Activated CD4-positive, alpha-beta T cell treated with anti-CD3 and anti-CD28 coated beads, Interleukin-2, amount 10 ng/mL, durations not matched to agents 24 days and 14 days (primary cell): ENCODE measurements at regions of chr9 and their contacts with region 1.

Region 1: GRCh38 chr9:89602978-89603766 is 1.6 kb upstream of the GADD45G start:
- DNase-seq: peak; percentile 97
- H3K4me3 Mint-ChIP-seq: peak overlapping the region; percentile 92
- H3K27ac Mint-ChIP-seq: peak overlapping the region; percentile 89
- H3K4me1 Mint-ChIP-seq: peaks cover 32% of the 10 kb centered on the region
- H3K27me3 Mint-ChIP-seq: peaks cover 17% of the 10 kb centered on the region

Region 2: DNA sequence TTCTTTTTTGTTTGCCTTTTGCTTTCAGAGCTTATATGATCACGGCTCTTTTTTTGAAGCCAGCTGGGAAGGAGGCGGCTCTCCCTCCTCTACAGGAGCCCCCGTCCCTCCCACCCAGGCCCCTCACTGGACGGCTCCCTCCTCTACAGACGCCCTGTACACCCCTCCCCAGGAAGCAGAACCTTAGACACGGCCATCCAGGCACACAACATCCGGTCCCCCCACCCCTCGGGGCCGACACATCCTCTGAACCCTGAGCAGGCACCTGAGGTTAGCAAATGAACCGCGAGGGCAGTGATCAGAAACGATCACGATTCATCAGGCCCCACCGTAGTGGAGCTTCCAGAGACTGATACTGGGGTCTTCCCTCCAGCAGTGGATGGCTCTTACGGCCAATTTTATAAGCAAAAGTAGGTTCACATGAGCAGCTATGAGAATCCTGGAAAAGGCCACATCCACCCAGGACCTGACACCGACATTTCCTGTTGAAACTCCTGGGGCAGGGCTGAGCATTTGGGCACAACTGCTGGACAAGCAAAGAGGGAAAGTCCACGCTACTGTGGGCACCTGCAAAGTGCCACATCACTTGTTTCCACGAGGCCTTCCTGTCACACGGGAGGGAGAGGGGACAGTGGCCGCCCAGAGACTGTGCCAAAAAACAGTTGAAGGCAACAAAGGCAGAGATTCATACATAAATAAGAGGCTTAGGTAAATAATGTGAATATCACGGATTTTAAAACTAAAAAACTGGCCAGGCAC is 184.1 kb before region 1 on chr9:
- intact Hi-C with region 1: loop called (anchors 5 kb)
- DNase-seq: peak; percentile 92
- H3K4me3 Mint-ChIP-seq: peak overlapping the region; percentile 93
- H3K27ac Mint-ChIP-seq: peak overlapping the region; percentile 86
- H3K4me1 Mint-ChIP-seq: peaks cover 82% of the 10 kb centered on the region
- H3K27me3 Mint-ChIP-seq: no peaks in the 10 kb centered on the region

Region 3: GRCh38 chr9:89437000-89437631 is 166.1 kb before region 1 on chr9:
- intact Hi-C with region 1: no loop called
- DNase-seq: no peak
- H3K4me3 Mint-ChIP-seq: peak overlapping the region; percentile 31
- H3K27ac Mint-ChIP-seq: peak overlapping the region; percentile 70
- H3K4me1 Mint-ChIP-seq: peaks cover 60% of the 10 kb centered on the region
- H3K27me3 Mint-ChIP-seq: no peaks in the 10 kb centered on the region

Region 4: DNA sequence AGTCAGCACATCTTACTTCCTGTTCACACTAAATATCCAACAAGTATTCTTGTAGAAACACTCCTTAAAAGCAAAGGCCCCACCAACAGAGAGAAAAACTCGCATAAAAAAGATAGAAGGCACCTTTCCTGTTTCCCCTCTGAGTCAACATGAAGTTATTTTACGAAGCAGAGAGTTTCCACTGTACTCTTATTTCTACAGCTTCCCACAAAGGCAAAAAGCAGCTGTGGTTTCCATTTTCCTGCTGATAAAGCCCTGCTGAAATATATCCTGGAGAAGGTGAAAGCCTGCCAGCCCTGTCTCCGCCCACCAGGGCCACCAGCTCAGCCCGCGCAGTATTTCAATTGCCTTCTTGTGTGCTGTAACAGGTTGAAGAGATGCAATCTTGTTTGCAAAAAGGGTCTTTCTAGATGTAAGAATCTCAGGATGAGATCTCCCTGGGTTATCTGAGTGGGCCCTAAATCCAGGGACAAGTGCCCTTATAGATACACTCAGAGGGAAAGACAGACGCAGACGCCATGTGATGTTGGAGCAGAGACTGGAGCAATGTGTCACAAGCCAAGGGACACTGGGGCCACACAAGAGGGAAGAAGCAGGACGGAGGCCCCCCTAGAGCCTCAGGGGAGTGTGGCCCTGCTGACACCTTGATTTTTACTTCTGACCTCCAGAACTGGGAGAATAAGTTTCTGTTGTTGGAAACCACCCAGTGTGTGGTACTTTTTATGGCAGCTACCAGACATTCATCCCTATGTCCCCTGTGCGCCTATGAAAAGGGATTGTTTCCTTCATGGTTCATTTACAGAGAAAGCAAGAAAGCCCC is 125.2 kb before region 1 on chr9:
- intact Hi-C with region 1: no loop called
- DNase-seq: peak; percentile 89
- H3K4me3 Mint-ChIP-seq: peak overlapping the region; percentile 88
- H3K27ac Mint-ChIP-seq: peak overlapping the region; percentile 97
- H3K4me1 Mint-ChIP-seq: peaks cover 84% of the 10 kb centered on the region
- H3K27me3 Mint-ChIP-seq: no peaks in the 10 kb centered on the region

Region 5: GRCh38 chr9:89738137-89738932 is 135.2 kb after region 1 on chr9:
- intact Hi-C with region 1: loop called (anchors 1 kb)
- DNase-seq: no peak
- H3K4me3 Mint-ChIP-seq: no peak overlapping the region
- H3K27ac Mint-ChIP-seq: peak overlapping the region; percentile 30
- H3K4me1 Mint-ChIP-seq: peaks cover 57% of the 10 kb centered on the region
- H3K27me3 Mint-ChIP-seq: no peaks in the 10 kb centered on the region

Region 6: DNA sequence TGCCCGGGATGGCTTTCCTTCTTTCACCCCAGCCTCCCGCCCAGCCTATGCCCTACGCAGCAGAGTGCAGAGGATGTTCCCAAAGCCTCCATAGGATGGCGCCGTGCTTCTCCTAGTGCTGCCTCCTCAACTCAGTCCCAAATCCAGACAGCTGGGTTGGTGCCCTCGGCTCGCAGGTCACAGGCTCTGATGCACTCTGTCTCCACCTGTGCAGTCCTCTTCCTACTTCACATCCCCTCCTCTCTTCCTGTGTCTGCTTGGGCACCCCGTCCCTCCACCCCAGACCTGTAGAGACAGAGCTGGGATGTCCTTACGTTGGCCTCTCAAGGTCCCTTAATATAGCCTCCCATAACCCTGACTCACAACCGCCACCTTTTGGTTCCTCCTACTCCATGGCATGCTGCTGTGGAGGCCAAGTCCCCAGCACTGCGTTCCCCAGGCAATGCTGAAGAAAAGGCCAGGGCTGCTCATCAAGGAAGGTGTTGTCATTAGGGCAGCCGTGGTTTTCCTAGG is 316.1 kb after region 1 on chr9:
- intact Hi-C with region 1: loop called (anchors 1 kb)
- DNase-seq: peak; percentile 87
- H3K4me3 Mint-ChIP-seq: no peak overlapping the region
- H3K27ac Mint-ChIP-seq: peak overlapping the region; percentile 56
- H3K4me1 Mint-ChIP-seq: peaks cover 38% of the 10 kb centered on the region
- H3K27me3 Mint-ChIP-seq: peaks cover 3% of the 10 kb centered on the region

Region 7: GRCh38 chr9:90102292-90102901 is 499.2 kb after region 1 on chr9:
- intact Hi-C with region 1: loop called (anchors 1 kb)
- DNase-seq: peak; percentile 94
- H3K4me3 Mint-ChIP-seq: no peak overlapping the region
- H3K27ac Mint-ChIP-seq: peak overlapping the region; percentile 39
- H3K4me1 Mint-ChIP-seq: peaks cover 14% of the 10 kb centered on the region
- H3K27me3 Mint-ChIP-seq: peaks cover 11% of the 10 kb centered on the region